ENCODE measurements at regions of chr22 and their contacts with region 1.

Region 1: DNA sequence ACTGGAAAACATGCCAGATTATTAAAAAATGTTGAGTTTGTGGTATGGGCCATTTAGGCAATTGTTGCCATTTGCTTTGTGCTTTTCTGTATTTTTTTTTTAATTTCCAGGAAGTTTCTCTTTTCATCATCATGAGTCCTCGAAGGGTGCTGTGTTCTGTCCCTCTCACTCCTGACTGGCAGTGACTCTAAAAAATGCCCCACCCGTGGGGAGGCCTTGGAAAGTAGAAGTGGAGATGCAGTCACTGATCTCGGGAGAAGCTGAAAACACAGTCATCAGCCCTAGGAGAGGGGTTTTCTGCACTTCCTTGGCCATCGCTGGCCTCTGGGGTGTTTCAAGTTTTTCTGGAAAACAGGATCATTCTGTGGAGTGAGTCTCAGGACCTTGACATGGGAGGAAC is 98.5 kb upstream of the GRK3 start:
- DNase-seq: no peak
- ATAC-seq: no peak
- H3K4me3 ChIP-seq: no peak overlapping the region
- H3K27ac ChIP-seq: no peak overlapping the region
- H3K4me1 ChIP-seq: no peaks in the 10 kb centered on the region
- H3K27me3 ChIP-seq: no peaks in the 10 kb centered on the region

Region 2: DNA sequence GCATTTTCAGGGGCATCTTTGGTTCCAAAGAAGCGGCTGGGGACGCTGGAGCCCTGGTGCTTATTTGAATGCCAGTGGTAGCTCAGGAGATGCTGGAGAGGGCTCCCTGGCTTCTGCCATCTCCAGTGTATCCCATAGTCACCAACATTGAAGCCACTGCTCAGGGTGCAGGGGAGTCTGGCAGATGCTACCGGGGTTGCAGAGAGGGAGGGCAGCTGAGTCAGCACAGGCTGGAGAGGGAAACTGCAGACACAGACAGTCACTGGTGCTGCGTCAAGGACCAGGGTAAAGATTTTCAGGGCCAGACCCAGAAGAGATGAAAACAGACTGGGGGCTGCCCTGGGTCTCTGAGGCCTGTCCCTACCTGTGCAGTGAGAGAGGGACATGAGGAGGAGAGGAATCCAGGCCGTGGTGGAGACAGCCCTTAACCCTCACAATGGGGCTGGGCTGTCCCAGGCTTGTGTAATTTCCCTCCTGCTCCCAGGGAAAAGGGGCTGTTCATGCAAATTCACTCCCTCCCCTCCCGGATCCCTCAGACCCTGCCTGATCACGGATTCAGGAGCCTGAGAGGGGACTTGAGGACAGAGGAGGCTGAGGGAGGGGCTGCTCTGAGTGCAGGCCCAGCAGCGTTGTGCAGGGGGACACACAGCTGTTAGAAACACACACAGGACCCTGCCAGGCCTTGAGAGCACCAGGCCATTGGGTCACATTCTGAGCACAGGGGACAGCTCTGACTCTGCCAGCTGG is 28.4 kb before region 1 on chr22:
- intact Hi-C with region 1: no loop called
- DNase-seq: no peak
- ATAC-seq: peak in 1 of 2 donors; percentile 34
- H3K4me3 ChIP-seq: no peak overlapping the region
- H3K27ac ChIP-seq: no peak overlapping the region
- H3K4me1 ChIP-seq: no peaks in the 10 kb centered on the region
- H3K27me3 ChIP-seq: no peaks in the 10 kb centered on the region

Region 3: GRCh38 chr22:25645266-25645665 is 179.3 kb after region 1 on chr22:
- intact Hi-C with region 1: no loop called
- DNase-seq: no peak
- ATAC-seq: no peak
- H3K4me3 ChIP-seq: no peak overlapping the region
- H3K27ac ChIP-seq: no peak overlapping the region
- H3K4me1 ChIP-seq: peaks cover 5% of the 10 kb centered on the region
- H3K27me3 ChIP-seq: no peaks in the 10 kb centered on the region

Region 4: GRCh38 chr22:25702040-25702439 is 236.1 kb after region 1 on chr22:
- intact Hi-C with region 1: loop called (anchors 1 to 5 kb)
- DNase-seq: no peak
- ATAC-seq: no peak
- H3K4me3 ChIP-seq: no peak overlapping the region
- H3K27ac ChIP-seq: no peak overlapping the region
- H3K4me1 ChIP-seq: no peaks in the 10 kb centered on the region
- H3K27me3 ChIP-seq: no peaks in the 10 kb centered on the region

Region 5: DNA sequence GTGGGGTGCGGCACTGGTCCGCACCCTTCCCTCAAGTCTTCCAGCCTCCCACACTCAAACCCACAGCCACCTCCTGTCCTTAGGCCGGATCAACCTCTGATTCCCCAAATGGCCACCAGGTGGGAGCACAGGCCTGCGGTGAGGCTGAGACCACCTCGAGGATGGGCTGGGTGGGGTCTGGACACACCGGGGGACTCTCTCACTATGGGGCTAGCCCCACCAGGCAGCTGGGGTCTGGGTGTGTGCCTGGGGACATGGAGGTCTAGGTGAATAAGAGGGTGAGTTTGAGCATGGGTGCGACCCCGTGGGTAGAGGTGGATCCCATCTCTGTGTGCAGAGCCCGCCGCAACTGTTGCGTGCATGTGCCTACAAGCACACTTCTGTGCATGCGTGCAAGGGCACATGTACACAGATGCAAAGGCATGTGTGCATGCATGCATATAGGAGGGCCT is 308.7 kb after region 1 on chr22:
- intact Hi-C with region 1: loop called in 3 of 4 experiments (anchors 2 to 5 kb)
- DNase-seq: no peak
- ATAC-seq: peak in 1 of 2 donors; percentile 9
- H3K4me3 ChIP-seq: no peak overlapping the region
- H3K27ac ChIP-seq: no peak overlapping the region
- H3K4me1 ChIP-seq: no peaks in the 10 kb centered on the region
- H3K27me3 ChIP-seq: no peaks in the 10 kb centered on the region

Measured in right cardiac atrium (tissue), 5 donors.